A673 (cell line): ENCODE measurements at regions of chr3 and their contacts with region 1.

Region 1: GRCh38 chr3:49566312-49566711 is 12.0 kb downstream of the BSN start:
- DNase-seq: no peak
- H3K4me3 ChIP-seq: no peak overlapping the region
- H3K27ac ChIP-seq: no peak overlapping the region
- H3K4me1 ChIP-seq: no peaks in the 10 kb centered on the region
- H3K27me3 ChIP-seq: no peaks in the 10 kb centered on the region
- CTCF ChIP-seq: peak; percentile 44; the same call in 1 of the 2 replicates

Region 2: DNA sequence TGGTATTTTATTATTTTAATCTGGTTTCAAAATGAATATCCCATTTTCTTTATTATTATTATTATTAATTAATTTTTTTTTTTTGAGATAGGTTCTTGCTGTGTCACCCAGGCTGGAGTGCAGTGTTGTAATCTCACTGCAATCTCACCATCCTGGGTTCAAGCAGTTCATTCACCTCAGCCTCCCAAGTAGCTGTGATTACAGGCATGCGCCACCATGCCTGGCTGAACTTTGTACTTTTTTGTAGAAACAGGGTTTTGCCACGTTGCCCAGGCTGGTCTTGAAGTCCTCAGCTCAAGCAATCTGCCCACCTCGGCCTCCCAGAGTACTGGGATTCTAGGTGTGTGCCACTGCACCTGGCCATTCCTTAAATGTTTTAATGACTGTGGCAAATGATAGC is 67.7 kb before region 1 on chr3:
- CTCF ChIA-PET with region 1: interaction called, 16 read pairs
- POLR2A ChIA-PET with region 1: no interaction called
- intact Hi-C with region 1: no loop called
- DNase-seq: no peak
- H3K4me3 ChIP-seq: no peak overlapping the region
- H3K27ac ChIP-seq: no peak overlapping the region
- H3K4me1 ChIP-seq: no peaks in the 10 kb centered on the region
- H3K27me3 ChIP-seq: no peaks in the 10 kb centered on the region
- CTCF ChIP-seq: no peak

Region 3: DNA sequence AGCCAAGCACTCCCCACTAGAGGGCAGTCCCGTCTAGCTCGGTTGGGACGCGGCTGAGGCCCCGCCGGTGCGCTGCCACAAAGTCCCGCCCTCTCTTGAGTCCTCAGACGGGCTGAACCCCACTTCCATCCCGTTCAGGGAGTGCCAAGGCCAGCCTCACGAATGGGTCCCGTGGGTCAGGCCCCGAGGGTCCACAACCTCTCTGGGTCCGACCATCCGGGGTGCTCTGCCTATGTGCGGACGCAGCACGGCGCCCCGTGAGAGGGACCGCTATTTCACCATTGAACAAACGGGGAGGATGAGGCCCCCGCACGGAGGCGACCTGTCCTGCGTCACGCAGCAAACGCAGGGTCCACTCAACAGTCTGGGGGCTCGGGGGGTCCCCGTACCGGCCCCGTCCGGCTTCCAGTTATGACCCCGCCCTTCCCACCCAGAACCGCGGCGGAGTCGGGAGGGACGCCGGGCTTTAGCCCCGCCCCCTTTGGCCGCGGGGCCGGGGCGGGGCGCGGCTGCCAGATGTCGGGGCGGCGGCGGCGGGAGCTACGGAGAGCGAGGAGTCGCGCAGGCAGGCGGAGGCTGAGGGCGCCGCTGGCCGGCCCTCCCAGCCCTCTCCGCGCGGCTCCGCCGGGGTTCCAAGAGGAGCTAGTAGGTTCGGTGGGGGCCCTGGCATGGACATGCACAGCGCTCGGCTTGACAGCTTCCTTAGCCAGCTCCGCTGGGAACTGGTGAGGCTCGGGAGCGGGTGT is 236.6 kb after region 1 on chr3 and contains the start of gene INKA1:
- CTCF ChIA-PET with region 1: no interaction called
- POLR2A ChIA-PET with region 1: no interaction called
- intact Hi-C with region 1: no loop called
- DNase-seq: peak; percentile 81
- H3K4me3 ChIP-seq: peak within 1 kb of the TSS; percentile 64
- H3K27ac ChIP-seq: peak within 1 kb of the TSS; percentile 98
- H3K4me1 ChIP-seq: peaks cover 37% of the 10 kb centered on the region
- H3K27me3 ChIP-seq: no peaks in the 10 kb centered on the region
- CTCF ChIP-seq: peak; percentile 75
- total RNA-seq, gene INKA1: 7.1 and 13.8 TPM in 2 replicates